Dendritic cell treated with granulocyte-macrophage colony-stimulating factor and Interleukin-4, amounts not matched to agents 40 ng/mL and 50 ng/mL, for 4 days (primary cell): ENCODE measurements at regions of chr18 and their contacts with region 1.

Region 1: DNA sequence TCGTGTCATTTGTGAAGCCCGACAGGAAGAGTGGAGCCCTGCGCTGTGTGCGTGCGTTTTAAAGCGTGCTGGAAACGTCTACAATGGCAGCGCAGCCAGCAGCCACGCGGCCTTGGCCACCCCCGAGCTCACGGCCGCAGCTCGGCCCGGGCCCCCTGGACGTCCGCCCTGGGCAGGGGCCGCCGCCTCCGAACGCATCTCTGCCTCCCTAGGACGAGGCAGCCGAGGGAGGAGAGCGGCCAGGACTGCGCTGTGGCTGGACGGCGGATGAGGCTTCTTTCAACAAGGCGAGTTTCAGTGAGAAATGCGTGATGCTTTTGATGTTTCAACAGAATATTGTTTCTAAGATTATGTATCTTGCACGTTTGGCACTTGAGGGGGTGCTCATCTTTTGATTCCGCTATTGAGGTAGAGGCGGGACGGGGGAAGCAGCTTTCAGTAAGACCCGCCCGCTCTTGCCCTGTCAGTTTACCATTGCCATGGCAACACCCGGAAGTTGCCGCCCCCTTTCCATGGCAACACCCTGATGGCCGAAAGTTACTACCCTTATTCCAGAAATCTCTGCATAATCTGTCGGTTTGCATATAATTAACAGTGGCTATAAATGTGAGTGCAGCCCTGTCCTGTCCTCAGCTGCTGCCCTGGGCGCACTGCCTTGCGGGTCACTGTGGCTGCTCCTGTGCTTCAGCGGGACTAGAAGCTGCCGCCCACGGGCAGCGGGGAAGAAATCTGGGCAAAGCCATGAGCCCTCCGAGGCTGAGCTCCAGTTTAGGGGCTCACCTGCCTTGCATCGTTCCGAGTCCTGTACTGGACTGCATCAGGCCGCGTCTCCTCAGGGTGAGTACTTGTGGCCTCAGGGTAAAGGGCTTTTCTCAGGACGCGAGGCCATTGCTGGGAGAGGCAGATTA is 38.6 kb downstream of the ADNP2 start:
- H3K4me3 Mint-ChIP-seq: peak overlapping the region; percentile 81
- H3K27ac Mint-ChIP-seq: peak overlapping the region; percentile 86
- H3K4me1 Mint-ChIP-seq: peaks cover 21% of the 10 kb centered on the region
- H3K27me3 Mint-ChIP-seq: peaks cover 5% of the 10 kb centered on the region

Region 2: GRCh38 chr18:79679111-79679872 is 468.4 kb before region 1 on chr18 and contains the start of gene CTDP1:
- intact Hi-C with region 1: loop called (anchors 10 kb)
- H3K4me3 Mint-ChIP-seq: peak within 1 kb of the TSS; percentile 90
- H3K27ac Mint-ChIP-seq: peak within 1 kb of the TSS; percentile 97
- H3K4me1 Mint-ChIP-seq: peaks cover 46% of the 10 kb centered on the region
- H3K27me3 Mint-ChIP-seq: no peaks in the 10 kb centered on the region

Region 3: DNA sequence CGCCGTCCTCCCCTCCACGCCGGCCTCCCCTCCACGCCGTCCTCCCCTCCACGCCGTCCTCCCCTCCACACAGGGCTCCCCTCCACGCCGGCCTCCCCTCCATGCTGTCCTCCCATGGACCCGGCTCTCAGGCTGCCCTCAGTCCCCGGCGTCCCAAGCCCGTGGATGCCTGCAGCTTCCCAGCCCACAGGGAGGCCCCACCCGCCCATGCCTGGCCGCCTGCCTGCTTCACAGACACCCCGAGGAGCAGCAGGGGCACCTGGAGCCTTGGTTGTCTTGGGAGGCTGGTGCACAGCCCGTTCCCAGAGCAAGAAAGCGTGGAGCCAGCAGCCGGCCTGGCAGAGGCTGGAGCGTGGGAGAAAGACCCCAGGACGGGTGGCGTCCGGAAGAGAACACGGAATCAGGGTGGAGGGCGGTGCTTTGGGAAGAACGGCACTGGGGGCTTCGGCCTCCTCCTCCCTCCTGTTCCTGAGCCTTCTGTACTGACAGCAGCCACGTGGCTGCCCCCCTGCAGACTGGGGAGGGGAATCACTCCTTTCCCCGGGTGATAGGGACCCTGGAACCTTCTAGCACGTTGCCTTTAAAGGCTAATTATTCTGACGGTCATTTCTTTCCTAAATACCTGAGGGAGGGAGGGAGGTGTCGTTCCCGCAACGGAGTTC is 376.1 kb before region 1 on chr18:
- intact Hi-C with region 1: no loop called
- H3K4me3 Mint-ChIP-seq: no peak overlapping the region
- H3K27ac Mint-ChIP-seq: no peak overlapping the region
- H3K4me1 Mint-ChIP-seq: no peaks in the 10 kb centered on the region
- H3K27me3 Mint-ChIP-seq: peaks cover 14% of the 10 kb centered on the region

Region 4: DNA sequence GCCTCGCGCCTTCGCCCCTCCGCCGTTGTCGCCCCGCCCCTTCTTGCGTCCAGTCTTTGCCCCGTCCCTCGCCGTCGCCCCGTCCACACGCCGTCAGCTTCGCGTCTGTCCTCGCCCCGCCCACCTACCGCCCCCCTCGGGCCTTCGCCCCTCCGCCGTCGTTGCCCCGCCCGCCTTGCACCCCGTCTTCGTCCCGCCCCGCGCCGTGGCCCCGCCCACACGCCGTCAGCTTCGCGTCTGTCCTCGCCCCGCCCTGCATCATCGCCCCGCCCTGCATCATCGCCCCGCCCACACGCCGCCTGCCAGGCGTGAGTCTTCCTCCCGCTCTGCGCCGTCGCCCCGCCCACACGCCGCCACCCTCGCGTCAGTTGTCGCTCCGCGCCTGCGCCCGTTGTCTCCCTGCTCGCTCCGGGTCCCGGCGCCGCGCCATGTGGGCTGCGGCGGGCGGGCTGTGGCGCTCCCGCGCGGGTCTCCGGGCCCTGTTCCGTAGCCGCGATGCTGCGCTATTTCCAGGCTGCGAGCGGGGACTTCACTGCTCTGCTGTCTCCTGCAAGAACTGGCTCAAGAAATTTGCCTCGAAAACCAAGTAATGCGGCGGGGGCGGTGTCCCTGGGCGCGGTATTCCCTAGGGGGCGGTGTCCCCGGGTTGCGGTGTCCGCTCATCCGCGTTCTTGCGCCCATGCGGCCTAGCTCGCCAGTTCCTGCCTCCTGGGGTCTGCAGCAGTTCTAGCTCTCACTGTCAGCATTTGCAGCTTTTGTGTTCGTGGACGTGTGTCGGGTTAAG is 113.4 kb before region 1 on chr18 and contains the start of gene RBFA:
- intact Hi-C with region 1: loop called (anchors 5 kb)
- H3K4me3 Mint-ChIP-seq: peak within 1 kb of the TSS; percentile 82
- H3K27ac Mint-ChIP-seq: peak within 1 kb of the TSS; percentile 95
- H3K4me1 Mint-ChIP-seq: peaks cover 27% of the 10 kb centered on the region
- H3K27me3 Mint-ChIP-seq: peaks cover 1% of the 10 kb centered on the region

Region 5: GRCh38 chr18:80108728-80109675 is 38.7 kb before region 1 on chr18 and contains the start of gene ADNP2:
- intact Hi-C with region 1: loop called (anchors 5 kb)
- H3K4me3 Mint-ChIP-seq: peak within 1 kb of the TSS; percentile 79
- H3K27ac Mint-ChIP-seq: peak within 1 kb of the TSS; percentile 78
- H3K4me1 Mint-ChIP-seq: peaks cover 25% of the 10 kb centered on the region
- H3K27me3 Mint-ChIP-seq: peaks cover 3% of the 10 kb centered on the region